ENCODE measurements at regions of chr10 and their contacts with region 1.

Region 1: DNA sequence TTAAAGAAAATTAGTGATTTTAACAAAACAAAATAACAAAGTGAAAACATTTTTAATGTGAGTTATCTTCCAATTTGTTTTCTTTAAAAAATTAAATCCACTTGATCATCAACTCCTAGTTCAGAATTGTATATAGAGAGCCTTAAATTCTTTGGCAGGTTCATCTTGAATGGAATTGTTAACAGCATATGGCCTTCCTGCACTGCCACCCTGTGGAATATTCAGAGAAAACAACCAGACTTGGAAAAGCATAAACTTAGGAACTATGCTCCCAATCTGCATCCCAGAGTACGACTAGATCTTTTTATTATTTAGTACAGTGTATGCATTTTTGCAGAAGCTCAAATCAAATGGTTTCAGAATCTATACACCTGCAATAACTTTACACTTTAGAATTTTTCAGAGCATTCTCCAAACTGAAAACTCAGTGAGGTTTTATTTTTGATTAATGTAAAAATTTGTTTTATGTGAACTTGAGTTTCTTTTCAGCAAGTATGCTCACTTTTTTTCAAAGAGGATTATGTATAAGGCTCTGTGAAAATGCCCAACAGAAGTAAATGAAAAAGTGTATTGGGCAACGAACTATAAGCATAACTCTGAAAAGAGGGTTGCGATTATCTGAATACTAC is 44.9 kb upstream of the ANK3 start:
- DNase-seq: peak; percentile 33 to 55
- H3K4me3 ChIP-seq: no peak overlapping the region
- H3K27ac ChIP-seq: no peak overlapping the region
- H3K4me1 ChIP-seq: no peaks in the 10 kb centered on the region
- H3K27me3 ChIP-seq: no peaks in the 10 kb centered on the region
- CTCF ChIP-seq: peak; percentile 93

Region 2: GRCh38 chr10:59240582-59241183 is 1193.8 kb before region 1 on chr10:
- CTCF ChIA-PET with region 1: no interaction called
- POLR2A ChIA-PET with region 1: no interaction called
- intact Hi-C with region 1: loop called (anchors 5 kb)
- DNase-seq: peak in 1 of 2 experiments; percentile 4
- H3K4me3 ChIP-seq: no peak overlapping the region
- H3K27ac ChIP-seq: no peak overlapping the region
- H3K4me1 ChIP-seq: no peaks in the 10 kb centered on the region
- H3K27me3 ChIP-seq: no peaks in the 10 kb centered on the region
- CTCF ChIP-seq: peak; percentile 88

Region 3: GRCh38 chr10:60114765-60115586 is 319.6 kb before region 1 on chr10:
- CTCF ChIA-PET with region 1: interaction called, 3 read pairs
- POLR2A ChIA-PET with region 1: no interaction called
- intact Hi-C with region 1: loop called (anchors 1 kb)
- DNase-seq: peak in 1 of 2 experiments; percentile 16
- H3K4me3 ChIP-seq: no peak overlapping the region
- H3K27ac ChIP-seq: no peak overlapping the region
- H3K4me1 ChIP-seq: no peaks in the 10 kb centered on the region
- H3K27me3 ChIP-seq: no peaks in the 10 kb centered on the region
- CTCF ChIP-seq: peak; percentile 76

Region 4: DNA sequence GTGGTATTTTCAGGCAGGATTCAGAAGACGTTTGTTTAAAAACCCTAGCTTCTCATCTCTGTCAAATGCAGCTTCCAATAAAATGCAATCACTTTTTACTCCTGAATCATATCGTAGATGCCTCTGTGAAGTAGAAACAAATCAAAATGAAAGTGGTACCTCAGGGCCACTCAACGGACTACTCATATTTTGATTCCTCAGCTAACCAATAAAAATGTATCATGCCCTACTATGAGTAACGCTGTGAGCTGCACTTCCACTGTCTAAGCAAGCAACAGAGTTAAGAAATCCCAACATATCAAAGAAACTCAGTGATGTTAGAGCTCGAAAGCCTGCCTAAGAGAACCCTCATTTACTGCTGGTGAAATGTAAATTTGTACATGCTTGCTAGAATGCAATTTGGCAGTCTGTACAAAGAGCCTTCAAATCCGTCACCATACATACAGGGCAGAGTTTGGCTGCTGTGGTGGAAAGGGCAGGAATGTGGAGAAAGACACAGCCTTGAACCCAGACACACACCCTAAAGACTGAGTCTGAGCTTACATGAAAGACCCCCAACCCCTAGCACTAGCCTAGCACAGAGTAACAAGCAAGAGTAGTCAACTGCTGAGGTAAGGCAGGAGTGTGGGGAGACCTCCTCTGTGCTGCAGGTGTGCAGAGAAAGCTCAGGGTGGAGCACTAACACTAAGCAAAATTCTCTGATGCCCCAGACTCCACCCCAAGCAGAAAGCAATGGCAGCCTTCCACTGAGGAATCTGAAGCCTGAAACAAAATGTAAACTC is 196.4 kb before region 1 on chr10:
- CTCF ChIA-PET with region 1: interaction called, 5 read pairs
- POLR2A ChIA-PET with region 1: no interaction called
- intact Hi-C with region 1: loop called (anchors 1 kb)
- DNase-seq: peak in 1 of 2 experiments; percentile 34
- H3K4me3 ChIP-seq: no peak overlapping the region
- H3K27ac ChIP-seq: no peak overlapping the region
- H3K4me1 ChIP-seq: no peaks in the 10 kb centered on the region
- H3K27me3 ChIP-seq: no peaks in the 10 kb centered on the region
- CTCF ChIP-seq: peak; percentile 53

Region 5: GRCh38 chr10:60466267-60467201 is 32.0 kb after region 1 on chr10:
- CTCF ChIA-PET with region 1: no interaction called
- POLR2A ChIA-PET with region 1: no interaction called
- intact Hi-C with region 1: no loop called
- DNase-seq: peak in 1 of 2 experiments; percentile 80
- H3K4me3 ChIP-seq: no peak overlapping the region
- H3K27ac ChIP-seq: peak overlapping the region; percentile 70
- H3K4me1 ChIP-seq: peaks cover 31% of the 10 kb centered on the region
- H3K27me3 ChIP-seq: no peaks in the 10 kb centered on the region
- CTCF ChIP-seq: no peak